ENCODE measurements at regions of chr1 and their contacts with region 1.

Region 1: DNA sequence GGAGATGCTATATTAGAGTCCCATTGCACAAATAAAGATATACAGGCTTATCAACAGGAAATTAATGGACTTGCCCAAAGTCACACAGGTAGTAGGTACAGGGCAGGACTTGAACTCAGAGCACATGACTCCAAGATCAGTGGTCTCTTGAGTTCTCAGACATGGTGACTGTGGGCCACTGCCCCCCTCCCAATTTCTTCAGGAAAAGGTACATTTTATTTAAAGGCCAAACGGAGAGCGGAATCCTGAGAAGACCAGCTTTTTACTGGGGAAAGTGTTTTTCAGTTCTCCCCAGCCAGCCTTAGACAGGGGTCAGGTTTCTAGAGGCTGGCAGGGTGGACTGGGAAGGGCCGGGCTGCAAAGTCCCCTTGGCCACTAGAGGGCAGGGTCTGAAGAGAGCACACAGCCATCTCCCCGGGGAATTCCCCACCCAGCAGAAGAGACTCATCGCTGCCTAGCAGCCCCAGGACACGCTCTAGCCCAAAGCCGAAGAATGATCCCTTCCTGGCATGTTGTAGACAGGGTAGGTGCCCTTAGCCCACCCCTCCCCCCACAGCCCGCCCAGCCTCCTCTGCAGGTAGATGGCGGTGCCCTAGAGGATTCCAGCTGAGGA is 29.7 kb downstream of the ACP6 start:
- DNase-seq: peak; percentile 93
- ATAC-seq: peak; percentile 92
- H3K4me3 ChIP-seq: no peak overlapping the region
- H3K27ac ChIP-seq: no peak overlapping the region
- H3K4me1 ChIP-seq: peaks cover 15% of the 10 kb centered on the region; the same call in 1 of the 2 replicates
- H3K27me3 ChIP-seq: no peaks in the 10 kb centered on the region
- CTCF ChIP-seq: peak; percentile 96

Region 2: GRCh38 chr1:147494998-147495580 is 145.6 kb before region 1 on chr1:
- CTCF ChIA-PET with region 1: interaction called, 5 read pairs
- POLR2A ChIA-PET with region 1: no interaction called
- intact Hi-C with region 1: loop called (anchors 1 kb)
- DNase-seq: peak; percentile 91
- ATAC-seq: peak; percentile 98
- H3K4me3 ChIP-seq: no peak overlapping the region
- H3K27ac ChIP-seq: no peak overlapping the region
- H3K4me1 ChIP-seq: no peaks in the 10 kb centered on the region
- H3K27me3 ChIP-seq: no peaks in the 10 kb centered on the region
- CTCF ChIP-seq: peak; percentile 99

Region 3: DNA sequence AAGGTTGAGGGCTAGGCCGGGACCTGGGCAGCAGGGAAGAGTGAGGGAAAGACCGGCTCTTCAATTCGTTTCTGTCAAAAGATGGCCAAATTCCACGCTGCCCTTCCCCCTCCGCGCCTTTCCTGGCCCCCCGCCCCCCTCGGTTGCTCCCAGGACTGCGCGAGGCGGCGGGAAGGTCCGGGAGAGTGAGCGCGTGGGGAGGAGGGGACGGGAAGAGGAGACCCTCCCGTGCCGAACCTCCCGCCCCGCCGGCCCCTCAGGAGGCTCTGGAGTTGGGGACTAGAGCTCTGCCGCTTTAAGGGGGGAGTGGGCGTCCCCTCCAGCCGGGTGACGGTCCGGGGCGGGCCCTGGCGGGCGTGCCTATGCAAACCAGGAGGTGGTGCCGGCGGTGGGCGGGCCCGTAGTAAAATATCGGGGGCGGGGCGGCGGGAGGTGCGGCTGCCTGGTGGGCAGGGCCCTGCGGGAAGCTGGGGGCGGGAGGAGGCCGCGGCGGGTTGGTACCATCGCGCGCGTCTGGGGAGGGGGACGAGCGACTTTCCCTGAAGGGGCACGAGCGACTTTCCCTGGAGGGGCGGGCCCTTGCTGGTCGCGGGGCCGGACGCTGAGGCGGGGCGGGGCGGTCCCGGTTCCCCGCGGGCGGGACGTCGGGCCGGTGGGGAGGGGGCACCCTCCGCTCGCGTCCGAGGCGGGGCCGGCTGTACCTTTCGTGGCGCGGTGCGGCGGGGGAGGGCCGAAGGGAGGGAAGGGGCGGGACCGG is 41.1 kb before region 1 on chr1:
- CTCF ChIA-PET with region 1: no interaction called
- POLR2A ChIA-PET with region 1: no interaction called
- intact Hi-C with region 1: loop called (anchors 1 kb)
- DNase-seq: peak; percentile 94
- ATAC-seq: peak; percentile 82
- H3K4me3 ChIP-seq: peak overlapping the region; percentile 75
- H3K27ac ChIP-seq: peak overlapping the region; percentile 32; the same call in 1 of the 2 replicates
- H3K4me1 ChIP-seq: peaks cover 18% of the 10 kb centered on the region
- H3K27me3 ChIP-seq: no peaks in the 10 kb centered on the region
- CTCF ChIP-seq: no peak

Region 4: DNA sequence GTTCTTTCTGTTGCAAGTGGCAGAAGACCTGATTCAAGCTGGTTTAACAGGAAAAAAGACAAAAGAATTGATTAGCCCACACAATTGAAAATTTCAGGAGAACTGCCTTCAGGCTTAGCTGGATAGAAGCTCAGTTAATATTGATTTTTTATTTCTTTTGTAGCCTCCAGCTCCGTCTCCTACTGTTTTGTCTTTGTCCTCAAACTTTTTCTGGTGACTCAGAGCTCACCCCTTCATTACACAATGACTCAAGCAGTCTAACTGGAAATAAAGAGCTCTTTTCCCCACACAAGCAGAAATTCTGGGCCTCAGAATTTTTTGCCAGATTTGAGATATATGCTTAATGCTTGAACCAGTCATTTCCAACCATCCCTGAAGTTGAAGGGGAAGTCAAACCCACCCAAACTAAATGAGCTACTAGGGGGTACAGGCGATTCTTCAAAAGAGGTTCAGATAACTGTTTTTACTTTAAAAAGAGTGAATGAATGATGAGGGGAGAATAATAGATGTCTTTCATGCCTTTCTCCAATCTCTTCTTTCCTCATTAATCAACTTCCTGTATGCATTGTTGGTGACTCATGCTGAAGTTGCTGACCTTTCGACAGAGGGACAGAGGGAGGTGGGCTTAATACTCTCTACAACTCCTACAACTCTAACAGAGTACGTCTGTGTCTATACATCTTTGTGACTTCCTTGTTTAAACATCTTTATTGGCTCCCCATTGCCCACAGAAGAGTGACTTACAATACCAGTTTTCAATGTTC is 35.8 kb after region 1 on chr1:
- CTCF ChIA-PET with region 1: no interaction called
- POLR2A ChIA-PET with region 1: no interaction called
- intact Hi-C with region 1: loop called (anchors 2 kb)
- DNase-seq: peak; percentile 95
- ATAC-seq: peak; percentile 93
- H3K4me3 ChIP-seq: peak overlapping the region; percentile 44
- H3K27ac ChIP-seq: peak overlapping the region; percentile 96
- H3K4me1 ChIP-seq: peaks cover 42% of the 10 kb centered on the region
- H3K27me3 ChIP-seq: no peaks in the 10 kb centered on the region
- CTCF ChIP-seq: no peak

Region 5: GRCh38 chr1:147717063-147717565 is 76.5 kb after region 1 on chr1:
- CTCF ChIA-PET with region 1: no interaction called
- POLR2A ChIA-PET with region 1: no interaction called
- intact Hi-C with region 1: loop called (anchors 1 kb)
- DNase-seq: peak; percentile 99
- ATAC-seq: peak; percentile 93
- H3K4me3 ChIP-seq: no peak overlapping the region
- H3K27ac ChIP-seq: peak overlapping the region; percentile 91
- H3K4me1 ChIP-seq: peaks cover 43% of the 10 kb centered on the region
- H3K27me3 ChIP-seq: no peaks in the 10 kb centered on the region
- CTCF ChIP-seq: no peak

Region 6: GRCh38 chr1:147890177-147890790 is 249.6 kb after region 1 on chr1:
- CTCF ChIA-PET with region 1: interaction called, 5 read pairs
- POLR2A ChIA-PET with region 1: no interaction called
- intact Hi-C with region 1: loop called (anchors 1 kb)
- DNase-seq: peak; percentile 97
- ATAC-seq: peak; percentile 86
- H3K4me3 ChIP-seq: no peak overlapping the region
- H3K27ac ChIP-seq: no peak overlapping the region
- H3K4me1 ChIP-seq: peaks cover 26% of the 10 kb centered on the region
- H3K27me3 ChIP-seq: no peaks in the 10 kb centered on the region
- CTCF ChIP-seq: peak; percentile 98

Measured in PC-3 (cell line).